ENCODE measurements at regions of chr7 and their contacts with region 1.

Region 1: DNA sequence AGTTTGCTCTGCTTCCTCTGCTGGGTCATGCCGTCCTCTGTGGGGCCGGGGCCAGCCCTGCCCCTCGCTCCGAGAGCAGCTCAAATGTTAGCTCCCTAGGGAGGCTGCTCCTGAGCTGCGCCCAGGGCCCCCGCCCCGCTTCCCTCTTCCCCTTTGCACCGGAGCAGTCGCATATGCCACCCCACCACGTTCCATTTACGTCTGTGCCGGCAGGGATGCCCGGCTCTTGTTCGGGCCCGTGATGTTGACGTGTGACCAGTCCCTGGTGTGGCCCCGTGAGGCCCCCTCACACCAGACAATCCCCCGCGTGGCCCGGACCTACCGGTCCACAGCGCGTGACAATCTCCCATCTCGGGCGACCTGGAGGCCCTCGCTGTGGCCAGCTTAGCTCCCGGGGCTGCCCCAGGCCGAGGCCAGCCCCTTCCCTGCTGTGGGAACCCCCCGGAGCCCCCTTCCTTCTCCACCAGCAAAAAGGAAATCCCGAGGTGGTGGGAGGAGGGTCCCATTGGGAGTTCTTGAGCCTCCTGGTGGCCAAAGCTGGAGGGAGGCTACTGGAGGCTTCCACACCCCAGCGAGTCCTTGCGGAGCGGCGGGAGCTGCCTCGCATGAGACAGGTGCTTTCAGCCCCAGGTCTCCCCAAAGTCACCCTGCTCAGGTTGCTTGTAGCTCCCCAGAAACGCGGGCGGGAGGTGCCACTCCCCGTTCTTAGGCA is 15.2 kb downstream of the FAM20C start:
- DNase-seq: no peak
- H3K4me3 ChIP-seq: no peak overlapping the region
- H3K27ac ChIP-seq: no peak overlapping the region
- H3K4me1 ChIP-seq: peaks cover 0 to 4% (median 0%) of the 10 kb centered on the region in 4 experiments; a peak in 1 of 7 replicates
- H3K27me3 ChIP-seq: no peaks in the 10 kb centered on the region
- CTCF ChIP-seq: peak in 2 of 3 experiments; percentile 54 to 69; a peak in 2 of 4 replicates
- EP300 ChIP-seq: no peak
- POLR2A ChIP-seq: no peak
- RAD21 ChIP-seq: peak; percentile 45 to 66

Region 2: DNA sequence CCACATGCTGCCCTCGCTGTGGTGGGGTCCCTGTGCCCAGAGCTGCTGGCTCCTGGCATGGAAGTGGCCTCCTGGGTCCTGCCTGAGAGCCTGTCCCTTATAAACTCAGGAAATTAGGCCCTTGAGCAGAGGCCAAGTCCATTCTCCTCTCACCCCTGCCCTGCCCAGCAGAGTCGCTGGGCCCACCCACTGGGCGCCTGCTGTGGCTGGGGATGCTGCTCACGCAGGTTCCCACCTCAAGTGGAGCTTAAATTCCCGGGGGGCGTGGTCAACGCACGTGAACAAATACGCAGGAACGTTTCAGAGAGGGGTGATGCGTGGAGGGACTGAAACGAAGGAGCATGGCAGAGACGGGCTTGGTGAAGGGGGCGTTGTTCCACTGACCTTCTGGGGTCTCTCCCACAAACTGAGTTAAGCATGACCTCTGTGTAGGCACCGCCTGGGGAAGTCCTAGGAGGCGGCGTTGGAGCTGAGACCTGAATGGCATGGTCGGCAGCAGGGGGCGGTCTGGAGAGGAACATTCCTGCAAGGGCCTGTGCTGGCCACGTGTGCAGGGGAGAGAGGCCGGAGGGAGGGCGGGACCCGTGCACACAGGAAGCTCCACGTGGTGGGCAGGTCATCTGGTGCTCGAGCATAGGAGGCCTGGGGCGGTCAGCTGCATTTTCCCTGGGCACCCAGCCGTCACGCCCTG is 12.7 kb after region 1 on chr7:
- CTCF ChIA-PET with region 1: interaction called, 10 read pairs
- POLR2A ChIA-PET with region 1: interaction called, 3 read pairs
- DNase-seq: peak in 1 of 2 experiments; percentile 73
- H3K4me3 ChIP-seq: no peak overlapping the region
- H3K27ac ChIP-seq: no peak overlapping the region
- H3K4me1 ChIP-seq: peaks cover 0 to 10% (median 6%) of the 10 kb centered on the region in 4 experiments; a peak in 5 of 7 replicates
- H3K27me3 ChIP-seq: no peaks in the 10 kb centered on the region
- CTCF ChIP-seq: peak; percentile 50 to 52 (median 50)
- EP300 ChIP-seq: no peak
- POLR2A ChIP-seq: no peak
- RAD21 ChIP-seq: peak in 1 of 2 experiments; percentile 9; a peak in 2 of 4 replicates